Cardiac septum (tissue), 1 donor: ENCODE measurements at regions of chr4 and their contacts with region 1.

Region 1: GRCh38 chr4:89307446-89308160 is at the start of gene GPRIN3:
- DNase-seq: peak; percentile 82
- total RNA-seq, gene GPRIN3: 7.3 TPM

Region 2: GRCh38 chr4:89245459-89245858 is 62.1 kb before region 1 on chr4:
- intact Hi-C with region 1: loop called (anchors 2 kb)
- DNase-seq: no peak

Region 3: DNA sequence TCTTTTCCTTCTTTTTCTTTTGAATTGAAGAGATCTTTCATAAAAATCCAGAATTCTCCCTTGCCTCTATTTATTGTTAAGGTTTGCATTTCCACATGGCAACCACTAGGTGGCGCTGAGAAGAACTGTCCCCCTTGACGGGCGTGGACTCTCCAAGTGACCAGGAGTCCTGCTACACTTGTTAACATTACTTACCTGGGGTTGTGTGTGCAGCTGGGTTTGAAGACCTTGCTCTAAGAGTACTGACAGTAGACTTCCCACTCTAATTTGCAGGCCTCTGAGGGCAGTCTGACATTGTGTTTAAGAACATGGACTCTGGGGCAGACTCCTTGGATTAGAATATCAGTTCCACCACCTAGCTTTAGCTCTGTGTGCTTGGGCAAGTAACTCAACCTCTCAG is 52.8 kb before region 1 on chr4:
- intact Hi-C with region 1: loop called (anchors 5 kb)
- DNase-seq: no peak